Ovary (tissue), 10 donors: ENCODE measurements at regions of chrX and their contacts with region 1.

Region 1: GRCh38 chrX:110346681-110347080 is 12.0 kb upstream of the RTL9 start:
- DNase-seq: peak; percentile 13 to 61 (median 30)
- H3K4me3 ChIP-seq: no peak overlapping the region
- H3K27ac ChIP-seq: no peak overlapping the region
- H3K4me1 ChIP-seq: no peaks in the 10 kb centered on the region
- H3K27me3 ChIP-seq: no peaks in the 10 kb centered on the region
- CTCF ChIP-seq: no peak
- EP300 ChIP-seq: no peak
- POLR2A ChIP-seq: no peak

Region 2: GRCh38 chrX:110407910-110408545 is 61.3 kb after region 1 on chrX:
- intact Hi-C with region 1: loop called in 1 of 4 experiments (anchors 2 kb)
- DNase-seq: peak in 3 of 5 donors; percentile 34 to 66 (median 40)
- H3K4me3 ChIP-seq: no peak overlapping the region
- H3K27ac ChIP-seq: no peak overlapping the region
- H3K4me1 ChIP-seq: peaks cover 1% of the 10 kb centered on the region
- H3K27me3 ChIP-seq: no peaks in the 10 kb centered on the region
- CTCF ChIP-seq: peak; percentile 46 to 66 (median 57)
- EP300 ChIP-seq: no peak
- POLR2A ChIP-seq: no peak

Region 3: DNA sequence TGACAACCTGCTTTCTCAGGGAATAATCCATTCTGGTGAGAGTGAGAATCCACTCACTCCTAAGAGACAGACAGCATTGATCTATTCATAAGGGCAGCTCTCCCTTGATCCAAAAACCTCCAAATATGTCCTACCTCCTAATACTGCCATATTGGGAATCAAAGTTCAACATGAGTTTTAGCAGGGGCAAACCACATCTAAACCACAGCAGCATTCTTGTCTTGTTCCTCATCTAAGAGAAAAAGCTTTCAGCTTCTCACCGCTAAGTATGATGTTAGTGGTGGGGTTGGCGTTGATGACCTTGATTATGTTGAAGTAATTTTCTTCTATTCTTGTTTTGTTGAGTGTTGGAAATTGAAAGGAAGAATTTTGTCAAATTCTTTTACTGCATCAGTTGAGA is 1234.4 kb after region 1 on chrX:
- intact Hi-C with region 1: no loop called
- DNase-seq: no peak
- H3K4me3 ChIP-seq: no peak overlapping the region
- H3K27ac ChIP-seq: no peak overlapping the region
- H3K4me1 ChIP-seq: no peaks in the 10 kb centered on the region
- H3K27me3 ChIP-seq: no peaks in the 10 kb centered on the region
- CTCF ChIP-seq: no peak
- EP300 ChIP-seq: no peak
- POLR2A ChIP-seq: no peak